HAP-1 (cell line): ENCODE measurements at regions of chr19 and their contacts with region 1.

Region 1: GRCh38 chr19:30682999-30683536 is 310.9 kb downstream of the ZNF536 start:
- DNase-seq: peak; percentile 76 to 85
- H3K4me3 ChIP-seq: no peak overlapping the region
- H3K4me1 ChIP-seq: no peaks in the 10 kb centered on the region
- H3K27me3 ChIP-seq: no peaks in the 10 kb centered on the region

Region 2: GRCh38 chr19:32041681-32042292 is 1358.7 kb after region 1 on chr19:
- in situ Hi-C with region 1: loop called (anchors 25 kb)
- DNase-seq: peak; percentile 62 to 68
- H3K4me3 ChIP-seq: no peak overlapping the region
- H3K4me1 ChIP-seq: no peaks in the 10 kb centered on the region
- H3K27me3 ChIP-seq: peaks cover 31% of the 10 kb centered on the region